ENCODE measurements at regions of chr3 and their contacts with region 1.

Region 1: DNA sequence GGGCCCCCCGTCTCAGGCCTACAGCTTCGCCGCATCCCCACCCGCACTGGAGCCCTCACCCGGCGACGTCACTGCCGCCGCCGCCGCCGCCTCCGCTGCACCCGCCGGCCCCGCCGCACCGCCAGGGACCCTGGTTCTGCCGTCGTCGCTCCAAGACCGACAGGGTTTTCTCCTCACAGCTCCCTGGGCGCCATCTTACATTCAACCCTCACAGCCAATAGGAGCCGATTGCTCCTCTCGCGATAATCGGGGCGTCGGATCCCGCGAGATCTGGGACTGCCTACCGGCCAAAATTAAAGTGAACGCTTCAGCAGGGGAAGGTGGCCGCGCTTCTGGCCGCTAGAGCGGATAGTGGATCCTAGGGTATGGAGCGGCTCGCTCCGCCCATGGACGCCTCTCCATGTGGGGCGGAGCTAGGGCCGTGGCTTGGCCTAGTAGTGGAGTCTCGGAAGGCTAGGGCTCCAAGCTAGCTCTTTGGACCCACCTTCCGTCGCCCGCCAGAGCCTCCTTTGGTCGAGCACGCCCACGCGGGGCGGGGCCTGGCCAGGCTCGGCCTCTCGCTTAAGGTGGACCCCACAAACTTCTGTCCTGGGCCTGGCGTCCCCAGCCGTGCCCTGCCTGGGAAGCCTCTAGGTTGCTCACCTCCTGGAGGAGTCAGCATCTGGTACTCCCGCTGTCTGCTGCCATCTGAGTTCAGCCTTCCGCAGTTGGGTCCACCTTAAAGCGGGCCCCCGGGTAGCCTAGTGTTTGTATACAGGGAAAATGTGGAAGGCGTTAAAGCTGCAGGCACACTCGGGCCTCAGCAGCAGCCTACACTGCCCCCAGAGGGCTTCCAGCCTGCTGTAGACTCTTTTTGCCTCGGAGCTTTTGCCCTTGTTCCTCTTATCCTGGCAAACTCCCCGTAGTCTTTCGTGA is at the start of gene QRICH1:
- DNase-seq: peak; percentile 95
- ATAC-seq: peak; percentile 78
- H3K4me3 Mint-ChIP-seq: peak within 1 kb of the TSS; percentile 97
- H3K27ac Mint-ChIP-seq: peak within 1 kb of the TSS; percentile 97
- H3K4me1 Mint-ChIP-seq: peaks cover 46% of the 10 kb centered on the region
- H3K27me3 Mint-ChIP-seq: no peaks in the 10 kb centered on the region
- CTCF ChIP-seq: no peak
- total RNA-seq, gene QRICH1: 142 and 155 TPM in 2 replicates

Region 2: GRCh38 chr3:48301020-48301796 is 792.9 kb before region 1 on chr3:
- CTCF ChIA-PET with region 1: no interaction called
- POLR2A ChIA-PET with region 1: no interaction called
- intact Hi-C with region 1: loop called (anchors 2 kb)
- DNase-seq: peak; percentile 95
- ATAC-seq: peak; percentile 91
- H3K4me3 Mint-ChIP-seq: peak within 1 kb of the TSS; percentile 97
- H3K27ac Mint-ChIP-seq: peak within 1 kb of the TSS; percentile 98
- H3K4me1 Mint-ChIP-seq: peaks cover 42% of the 10 kb centered on the region
- H3K27me3 Mint-ChIP-seq: no peaks in the 10 kb centered on the region
- CTCF ChIP-seq: no peak

Region 3: DNA sequence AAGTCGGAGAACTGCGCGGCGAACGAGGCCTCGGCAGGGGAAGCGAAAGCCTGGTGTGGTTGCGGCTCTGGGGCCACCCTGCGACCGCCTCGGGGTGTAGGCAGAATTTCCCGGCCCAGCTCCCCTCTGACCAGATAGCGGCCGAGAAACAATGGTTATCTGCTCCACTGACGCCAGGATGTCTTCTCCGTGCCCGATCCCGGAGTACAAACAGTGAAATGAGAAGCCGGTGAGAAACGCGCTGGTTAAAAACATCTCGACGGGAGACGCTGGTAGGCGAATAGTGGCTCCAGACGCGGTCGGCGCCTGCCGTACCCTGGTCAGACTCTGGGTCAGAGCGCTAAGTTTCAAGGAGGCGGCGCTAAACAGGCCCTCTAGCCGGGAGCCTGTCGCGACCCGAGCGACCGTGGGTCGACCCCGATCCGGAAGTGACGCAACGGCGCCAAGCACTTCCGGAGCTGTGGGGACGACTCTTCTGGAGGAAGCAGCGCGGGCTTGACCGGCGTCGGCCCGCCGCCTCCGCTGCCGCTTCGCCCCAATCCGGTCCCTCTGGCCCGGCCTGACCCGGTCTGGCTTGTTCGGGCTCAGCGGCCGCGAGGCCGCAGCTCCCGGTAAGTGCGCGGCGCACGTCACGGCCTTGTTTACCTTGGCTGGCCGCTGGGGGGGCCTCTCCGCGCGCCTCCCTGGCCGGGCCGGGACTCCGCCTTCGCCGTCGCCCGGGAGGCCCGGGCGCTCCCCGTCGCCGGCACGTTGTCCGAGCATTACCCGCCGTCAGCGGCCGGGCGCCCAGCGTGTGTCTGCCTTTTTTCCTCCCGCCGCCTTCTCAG is 175.5 kb before region 1 on chr3 and contains the start of gene ARIH2:
- CTCF ChIA-PET with region 1: no interaction called
- POLR2A ChIA-PET with region 1: interaction called, 14 read pairs
- intact Hi-C with region 1: loop called (anchors 1 kb)
- DNase-seq: peak; percentile 91
- ATAC-seq: peak; percentile 85
- H3K4me3 Mint-ChIP-seq: peak within 1 kb of the TSS; percentile 99
- H3K27ac Mint-ChIP-seq: peak within 1 kb of the TSS; percentile 98
- H3K4me1 Mint-ChIP-seq: peaks cover 32% of the 10 kb centered on the region
- H3K27me3 Mint-ChIP-seq: no peaks in the 10 kb centered on the region
- CTCF ChIP-seq: no peak
- total RNA-seq, gene ARIH2: 96.6 and 112 TPM in 2 replicates

Region 4: DNA sequence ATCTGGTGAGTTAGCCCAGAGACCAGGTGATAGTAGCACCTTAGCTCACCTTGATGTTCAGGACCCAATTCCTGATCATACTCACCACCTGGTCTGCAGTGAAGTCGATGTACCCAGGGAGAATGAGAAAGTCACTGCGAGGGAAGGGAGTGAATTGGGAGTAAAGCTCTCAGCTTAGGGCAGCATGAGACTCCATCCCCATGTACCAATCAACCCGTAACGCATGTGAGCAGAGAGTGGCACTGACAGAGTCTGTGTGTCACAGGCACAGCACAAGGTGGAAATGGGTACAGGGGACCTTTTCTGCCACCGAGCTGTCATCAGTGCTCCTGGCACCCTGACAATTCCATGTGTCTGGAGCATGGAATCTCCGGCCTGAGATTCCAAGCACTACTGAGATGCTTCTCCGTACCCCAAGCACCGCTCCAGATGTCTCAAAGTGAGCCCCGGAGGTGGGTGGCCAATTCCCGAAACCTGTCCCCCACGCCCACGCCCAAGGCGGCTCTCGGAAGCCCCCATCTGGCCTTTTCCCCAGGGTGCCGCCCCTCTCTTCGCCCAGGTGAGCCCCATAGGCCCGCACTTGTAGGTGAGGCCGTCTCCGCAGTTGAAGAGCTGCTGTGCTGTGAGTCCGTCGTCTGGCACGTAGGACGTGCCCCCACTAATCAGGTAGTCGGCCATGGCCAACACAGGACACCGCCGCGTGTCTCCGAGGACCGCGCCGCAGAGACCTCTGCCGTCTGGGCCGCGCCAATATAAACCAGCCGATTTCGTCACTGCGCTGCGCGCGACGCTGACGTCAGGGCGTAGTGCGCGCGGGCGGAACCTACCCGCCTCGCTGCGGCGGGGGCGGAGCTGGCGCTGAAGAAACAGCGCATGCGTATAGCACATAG is 65.2 kb before region 1 on chr3 and contains the start of gene IMPDH2:
- CTCF ChIA-PET with region 1: interaction called, 4 read pairs
- POLR2A ChIA-PET with region 1: interaction called, 43 read pairs
- intact Hi-C with region 1: loop called (anchors 2 kb)
- DNase-seq: peak; percentile 91
- ATAC-seq: peak; percentile 90
- H3K4me3 Mint-ChIP-seq: peak within 1 kb of the TSS; percentile 93
- H3K27ac Mint-ChIP-seq: peak within 1 kb of the TSS; percentile 94
- H3K4me1 Mint-ChIP-seq: peaks cover 49% of the 10 kb centered on the region
- H3K27me3 Mint-ChIP-seq: no peaks in the 10 kb centered on the region
- CTCF ChIP-seq: no peak
- total RNA-seq, gene IMPDH2: 387 and 414 TPM in 2 replicates

Region 5: GRCh38 chr3:49158108-49158709 is 64.1 kb after region 1 on chr3:
- CTCF ChIA-PET with region 1: interaction called, 3 read pairs
- POLR2A ChIA-PET with region 1: no interaction called
- intact Hi-C with region 1: loop called (anchors 2 kb)
- DNase-seq: peak; percentile 26
- ATAC-seq: peak; percentile 84
- H3K4me3 Mint-ChIP-seq: no peak overlapping the region
- H3K27ac Mint-ChIP-seq: no peak overlapping the region
- H3K4me1 Mint-ChIP-seq: peaks cover 2% of the 10 kb centered on the region
- H3K27me3 Mint-ChIP-seq: no peaks in the 10 kb centered on the region
- CTCF ChIP-seq: no peak

Region 6: GRCh38 chr3:49411968-49412631 is 318.0 kb after region 1 on chr3 and contains the starts of genes RHOA and TCTA:
- CTCF ChIA-PET with region 1: interaction called, 3 read pairs
- POLR2A ChIA-PET with region 1: interaction called, 17 read pairs
- intact Hi-C with region 1: loop called (anchors 1 kb)
- DNase-seq: peak; percentile 95
- ATAC-seq: peak; percentile 82
- H3K4me3 Mint-ChIP-seq: peak within 1 kb of the TSS; percentile 92
- H3K27ac Mint-ChIP-seq: peak within 1 kb of the TSS; percentile 92
- H3K4me1 Mint-ChIP-seq: peaks cover 79% of the 10 kb centered on the region
- H3K27me3 Mint-ChIP-seq: no peaks in the 10 kb centered on the region
- CTCF ChIP-seq: no peak
- total RNA-seq, gene RHOA: 399 and 425 TPM in 2 replicates
- total RNA-seq, gene TCTA: 26.4 and 32.2 TPM in 2 replicates

Region 7: GRCh38 chr3:49673715-49674496 is 579.8 kb after region 1 on chr3 and contains the start of gene APEH:
- CTCF ChIA-PET with region 1: no interaction called
- POLR2A ChIA-PET with region 1: no interaction called
- intact Hi-C with region 1: loop called (anchors 1 kb)
- DNase-seq: peak; percentile 98
- ATAC-seq: peak; percentile 88
- H3K4me3 Mint-ChIP-seq: peak within 1 kb of the TSS; percentile 91
- H3K27ac Mint-ChIP-seq: peak within 1 kb of the TSS; percentile 98
- H3K4me1 Mint-ChIP-seq: peaks cover 22% of the 10 kb centered on the region
- H3K27me3 Mint-ChIP-seq: no peaks in the 10 kb centered on the region
- CTCF ChIP-seq: no peak
- total RNA-seq, gene APEH: 109 and 113 TPM in 2 replicates

Measured in activated B cell treated with CpG ODN at 0.5 μM for 24 hours (primary cell).